Aorta (tissue), 5 donors: ENCODE measurements at regions of chr5 and their contacts with region 1.

Region 1: GRCh38 chr5:59943452-59944113 is 50.1 kb upstream of the PDE4D start:
- DNase-seq: no peak
- ATAC-seq: no peak
- H3K4me3 ChIP-seq: no peak overlapping the region
- H3K27ac ChIP-seq: no peak overlapping the region
- H3K4me1 ChIP-seq: peaks cover 0 to 2% of the 10 kb centered on the region in 2 donors
- H3K27me3 ChIP-seq: no peaks in the 10 kb centered on the region

Region 2: DNA sequence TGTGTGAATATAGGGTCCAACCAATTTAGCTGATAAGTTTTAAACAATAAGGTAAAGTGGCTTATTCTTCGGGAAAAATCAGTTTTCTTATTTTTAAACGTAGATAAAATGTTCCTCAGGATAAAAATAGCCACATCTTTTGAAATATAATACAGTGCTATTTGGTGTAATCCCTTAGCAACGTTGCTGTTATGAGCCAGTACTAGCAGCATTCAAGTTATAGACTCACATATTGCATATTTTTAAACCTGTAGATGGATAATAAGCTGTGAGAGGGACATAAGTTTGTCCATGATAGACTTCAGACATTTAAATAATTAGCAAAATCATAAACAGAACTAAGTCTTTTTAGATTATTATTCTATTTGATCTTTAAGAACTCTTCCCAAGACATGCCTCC is 56.3 kb before region 1 on chr5:
- intact Hi-C with region 1: loop called in 1 of 2 experiments (anchors 10 kb)
- DNase-seq: no peak
- ATAC-seq: no peak
- H3K4me3 ChIP-seq: no peak overlapping the region
- H3K27ac ChIP-seq: no peak overlapping the region
- H3K4me1 ChIP-seq: peaks cover 0 to 3% of the 10 kb centered on the region in 2 donors
- H3K27me3 ChIP-seq: no peaks in the 10 kb centered on the region

Region 3: GRCh38 chr5:59972043-59972442 is 28.5 kb after region 1 on chr5:
- intact Hi-C with region 1: no loop called
- DNase-seq: no peak
- ATAC-seq: no peak
- H3K4me3 ChIP-seq: no peak overlapping the region
- H3K27ac ChIP-seq: no peak overlapping the region
- H3K4me1 ChIP-seq: peaks cover 2 to 5% of the 10 kb centered on the region in 2 donors
- H3K27me3 ChIP-seq: no peaks in the 10 kb centered on the region

Region 4: GRCh38 chr5:59988396-59988795 is 44.8 kb after region 1 on chr5:
- intact Hi-C with region 1: no loop called
- DNase-seq: no peak
- ATAC-seq: no peak
- H3K4me3 ChIP-seq: no peak overlapping the region
- H3K27ac ChIP-seq: no peak overlapping the region
- H3K4me1 ChIP-seq: no peaks in the 10 kb centered on the region
- H3K27me3 ChIP-seq: no peaks in the 10 kb centered on the region